ENCODE measurements at regions of chr18 and their contacts with region 1.

Region 1: DNA sequence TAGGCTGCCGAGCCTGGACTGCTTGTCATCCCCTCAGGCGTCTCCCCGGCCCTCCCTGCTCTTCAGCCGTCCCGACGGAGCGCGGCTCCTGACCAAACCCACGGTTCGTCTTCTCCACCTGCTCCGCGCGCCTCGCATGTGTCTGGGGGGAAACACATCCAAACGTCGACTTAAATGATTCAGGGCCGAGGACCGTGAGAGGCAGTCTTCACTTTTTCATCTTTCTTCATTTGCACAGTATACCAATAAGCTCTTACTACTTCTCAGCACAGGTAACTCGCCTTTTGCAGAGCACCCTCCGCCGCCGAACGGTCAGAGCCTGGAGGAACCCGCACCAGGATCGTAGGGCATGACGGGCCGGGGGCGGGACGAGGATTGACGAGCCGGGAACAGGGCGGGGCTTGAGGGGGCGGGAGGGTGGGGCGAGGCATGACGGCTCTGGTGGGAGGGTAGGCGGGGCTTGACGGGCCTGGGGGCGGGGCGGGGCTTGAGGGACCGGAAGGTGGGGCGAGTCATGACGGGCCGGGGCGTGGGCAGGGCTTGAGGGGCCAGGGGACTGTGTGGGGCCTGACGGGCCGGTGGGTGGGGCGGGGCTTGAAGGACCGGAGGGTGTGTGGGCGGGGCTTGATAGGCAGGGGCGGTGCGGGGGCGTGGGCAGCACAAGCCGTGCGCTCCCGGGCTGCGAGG is at the start of gene SEH1L:
- DNase-seq: peak; percentile 100
- H3K4me3 Mint-ChIP-seq: peak within 1 kb of the TSS; percentile 99
- H3K27ac Mint-ChIP-seq: peak within 1 kb of the TSS; percentile 97
- H3K4me1 Mint-ChIP-seq: peaks cover 40% of the 10 kb centered on the region
- H3K27me3 Mint-ChIP-seq: no peaks in the 10 kb centered on the region
- total RNA-seq, gene SEH1L: 82.6 to 85.4 TPM

Region 2: DNA sequence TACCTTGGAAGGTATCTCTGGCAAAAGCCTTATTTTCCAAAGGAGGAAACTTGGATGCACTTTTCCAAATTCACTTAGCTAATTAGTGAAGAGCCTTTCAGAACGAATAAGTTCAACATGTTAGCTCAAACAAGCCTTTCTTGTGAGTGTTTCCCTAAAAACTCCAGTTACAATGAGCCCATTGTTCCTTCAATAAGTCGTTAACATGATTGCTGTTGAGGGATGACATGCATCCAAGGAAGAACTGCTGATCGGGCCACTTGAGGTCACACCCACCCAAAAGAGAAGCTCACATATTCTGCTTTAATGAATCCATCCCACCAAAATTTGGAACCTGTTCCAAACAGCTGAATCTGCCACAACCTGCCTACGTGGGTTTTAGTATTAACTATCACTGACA is 1386.2 kb before region 1 on chr18:
- CTCF ChIA-PET with region 1: no interaction called
- intact Hi-C with region 1: no loop called
- DNase-seq: no peak
- H3K4me3 Mint-ChIP-seq: no peak overlapping the region
- H3K27ac Mint-ChIP-seq: no peak overlapping the region
- H3K4me1 Mint-ChIP-seq: no peaks in the 10 kb centered on the region
- H3K27me3 Mint-ChIP-seq: peaks cover 3% of the 10 kb centered on the region

Region 3: GRCh38 chr18:12702221-12703095 is 245.0 kb before region 1 on chr18 and contains the starts of genes CEP76 and PSMG2:
- CTCF ChIA-PET with region 1: no interaction called
- intact Hi-C with region 1: loop called (anchors 1 kb)
- DNase-seq: peak; percentile 80
- H3K4me3 Mint-ChIP-seq: peak within 1 kb of the TSS; percentile 97
- H3K27ac Mint-ChIP-seq: peak within 1 kb of the TSS; percentile 97
- H3K4me1 Mint-ChIP-seq: peaks cover 41% of the 10 kb centered on the region
- H3K27me3 Mint-ChIP-seq: no peaks in the 10 kb centered on the region
- total RNA-seq, gene CEP76: 14.8 to 18.0 TPM
- total RNA-seq, gene PSMG2: 99.2 to 107 TPM

Region 4: GRCh38 chr18:12934454-12935071 is 12.9 kb before region 1 on chr18:
- CTCF ChIA-PET with region 1: interaction called, 20 read pairs
- intact Hi-C with region 1: no loop called
- DNase-seq: peak; percentile 89
- H3K4me3 Mint-ChIP-seq: no peak overlapping the region
- H3K27ac Mint-ChIP-seq: no peak overlapping the region
- H3K4me1 Mint-ChIP-seq: peaks cover 3% of the 10 kb centered on the region
- H3K27me3 Mint-ChIP-seq: no peaks in the 10 kb centered on the region

Region 5: DNA sequence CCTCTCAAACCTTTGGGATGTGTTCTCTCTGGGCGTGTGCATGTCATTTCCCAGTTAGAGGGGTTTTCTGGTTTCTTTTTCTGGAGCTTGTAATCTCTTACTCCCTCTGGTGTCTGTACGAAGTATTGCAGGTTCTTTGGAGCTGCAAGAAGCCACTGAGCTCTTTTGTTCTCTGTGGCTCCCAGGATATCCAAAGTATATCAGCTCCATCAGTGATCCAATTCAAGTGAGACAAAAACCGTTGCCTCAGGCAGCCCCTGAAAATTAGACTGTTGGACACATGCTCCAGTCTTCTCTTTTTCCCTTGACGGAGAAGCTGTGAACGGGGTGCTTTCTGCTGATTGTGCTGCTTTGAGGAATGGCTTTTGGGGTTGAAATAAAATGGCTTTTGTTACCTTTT is 212.1 kb after region 1 on chr18:
- CTCF ChIA-PET with region 1: interaction called, 5 read pairs
- intact Hi-C with region 1: loop called (anchors 5 kb)
- DNase-seq: peak; percentile 34
- H3K4me3 Mint-ChIP-seq: no peak overlapping the region
- H3K27ac Mint-ChIP-seq: no peak overlapping the region
- H3K4me1 Mint-ChIP-seq: peaks cover 3% of the 10 kb centered on the region
- H3K27me3 Mint-ChIP-seq: no peaks in the 10 kb centered on the region

Region 6: DNA sequence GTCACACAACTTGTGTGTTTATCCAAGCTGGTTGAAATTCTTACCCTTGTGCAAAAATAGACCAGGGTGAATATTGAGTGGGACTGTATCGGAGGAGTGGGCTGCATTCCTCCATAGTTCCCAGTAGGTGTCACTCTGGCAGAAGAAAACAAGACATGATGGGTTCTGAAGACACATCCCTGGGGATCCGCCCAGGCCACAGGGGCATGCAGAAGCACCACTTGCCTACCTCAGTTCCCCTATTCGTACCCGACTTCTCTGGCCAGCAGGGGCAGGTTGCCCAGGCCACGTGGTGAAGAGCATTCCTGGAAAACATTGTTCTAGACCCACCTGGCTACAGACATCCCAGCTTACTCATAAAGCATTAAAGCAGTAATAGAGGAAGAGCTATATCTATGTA is 610.6 kb after region 1 on chr18:
- CTCF ChIA-PET with region 1: no interaction called
- intact Hi-C with region 1: loop called (anchors 5 kb)
- DNase-seq: peak; percentile 48
- H3K4me3 Mint-ChIP-seq: no peak overlapping the region
- H3K27ac Mint-ChIP-seq: no peak overlapping the region
- H3K4me1 Mint-ChIP-seq: peaks cover 32% of the 10 kb centered on the region
- H3K27me3 Mint-ChIP-seq: no peaks in the 10 kb centered on the region

Measured in activated naive CD4-positive, alpha-beta T cell treated with anti-CD3 and anti-CD28 coated beads for 36 hours (primary cell).